ENCODE measurements at regions of chr19 and their contacts with region 1.

Region 1: GRCh38 chr19:46746281-46747013 is at the start of gene STRN4:
- DNase-seq: peak; percentile 68 to 75
- ATAC-seq: peak; percentile 67 to 72 (median 72)
- H3K4me3 ChIP-seq: peak within 1 kb of the TSS; percentile 99
- H3K27ac ChIP-seq: peak within 1 kb of the TSS; percentile 95
- H3K4me1 ChIP-seq: peaks cover 40% of the 10 kb centered on the region
- H3K27me3 ChIP-seq: no peaks in the 10 kb centered on the region
- CTCF ChIP-seq: no peak
- total RNA-seq, gene STRN4: 28.6 to 72.3 (median 40.6) TPM

Region 2: GRCh38 chr19:46616631-46617322 is 129.7 kb before region 1 on chr19:
- intact Hi-C with region 1: no loop called
- DNase-seq: peak in 1 of 2 donors; percentile 45
- ATAC-seq: peak in 3 of 4 donors; percentile 30 to 56 (median 47)
- H3K4me3 ChIP-seq: no peak overlapping the region
- H3K27ac ChIP-seq: no peak overlapping the region
- H3K4me1 ChIP-seq: peaks cover 17% of the 10 kb centered on the region
- H3K27me3 ChIP-seq: peaks cover 0 to 6% (median 0%) of the 10 kb centered on the region in 3 donors
- CTCF ChIP-seq: peak; percentile 13

Region 3: DNA sequence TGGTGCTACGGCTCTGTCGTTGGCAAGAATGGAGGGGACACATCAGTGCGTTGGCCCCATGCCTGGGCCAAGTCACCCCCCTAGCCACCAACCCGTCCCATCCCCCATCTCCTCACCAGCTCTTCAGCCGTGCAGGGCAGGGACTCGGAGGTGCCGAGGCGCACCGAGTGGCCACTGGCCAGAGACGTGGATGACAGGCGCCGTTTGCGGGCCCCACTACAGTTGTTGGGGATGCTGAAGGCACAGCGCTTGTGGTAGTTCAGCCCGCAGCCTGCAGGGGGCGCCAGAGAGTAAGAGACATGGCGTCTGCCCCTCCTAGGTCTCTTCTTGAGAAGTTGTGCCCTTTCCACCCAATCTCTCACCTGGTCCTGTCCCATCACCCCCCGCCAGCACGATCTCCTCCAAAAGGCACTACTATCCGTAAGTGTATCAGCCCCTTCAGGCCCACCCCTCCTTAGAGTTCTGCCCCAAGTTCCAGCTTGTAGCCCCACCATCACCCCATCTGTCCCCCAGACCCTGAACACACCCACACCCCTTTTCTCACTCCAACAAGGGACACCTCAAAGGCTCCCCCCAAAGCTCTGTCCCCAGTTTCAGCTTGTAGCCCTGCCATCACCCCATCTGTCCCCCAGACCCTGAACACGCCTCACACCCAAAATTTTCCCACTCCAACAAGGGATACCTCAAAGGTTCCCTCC is 41.9 kb before region 1 on chr19:
- intact Hi-C with region 1: loop called in 1 of 2 experiments (anchors 5 kb)
- DNase-seq: peak; percentile 76 to 87
- ATAC-seq: peak; percentile 76 to 86 (median 80)
- H3K4me3 ChIP-seq: no peak overlapping the region
- H3K27ac ChIP-seq: no peak overlapping the region
- H3K4me1 ChIP-seq: no peaks in the 10 kb centered on the region
- H3K27me3 ChIP-seq: no peaks in the 10 kb centered on the region
- CTCF ChIP-seq: peak; percentile 95

Region 4: GRCh38 chr19:46728693-46729676 is 17.5 kb before region 1 on chr19:
- intact Hi-C with region 1: no loop called
- DNase-seq: peak; percentile 80 to 85
- ATAC-seq: peak; percentile 71 to 80 (median 74)
- H3K4me3 ChIP-seq: no peak overlapping the region
- H3K27ac ChIP-seq: no peak overlapping the region
- H3K4me1 ChIP-seq: no peaks in the 10 kb centered on the region
- H3K27me3 ChIP-seq: no peaks in the 10 kb centered on the region
- CTCF ChIP-seq: peak; percentile 89

Region 5: DNA sequence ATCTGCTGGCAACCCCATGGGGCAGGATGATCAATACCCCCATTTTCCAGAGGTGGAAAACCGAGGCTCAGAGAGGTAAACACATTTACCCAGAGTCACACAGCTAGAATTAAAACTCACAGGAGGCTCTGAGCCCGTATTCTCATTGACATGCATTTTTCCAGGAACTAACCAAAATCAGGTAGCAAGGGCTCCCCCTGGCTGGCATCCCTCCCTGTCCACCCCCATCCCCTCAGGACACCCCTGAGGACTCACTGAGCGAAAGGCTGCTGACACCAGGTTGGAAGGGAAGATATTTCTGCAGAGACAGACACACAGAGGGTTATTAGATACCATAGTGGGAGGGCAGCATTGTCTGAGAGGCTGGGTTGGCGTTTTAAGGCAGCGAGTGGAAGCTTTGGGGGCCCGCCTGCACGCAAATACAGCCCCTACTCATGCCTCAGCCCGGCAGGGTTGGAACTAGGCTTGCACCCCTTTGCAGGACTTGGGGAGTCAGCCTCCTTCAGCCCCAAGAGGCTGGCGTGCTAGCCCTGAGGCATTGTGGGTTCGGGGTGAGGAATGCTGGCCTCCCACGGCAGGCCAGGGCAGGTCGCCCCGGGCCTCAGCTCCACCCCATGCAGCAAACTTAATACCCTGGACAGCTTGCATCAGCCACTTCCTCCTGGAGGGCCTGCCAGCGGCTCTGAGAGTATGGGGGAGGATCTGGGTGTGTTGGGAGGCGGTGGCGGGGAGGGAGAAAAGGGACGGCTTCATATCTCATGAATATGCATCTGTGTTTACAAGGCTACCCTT is 38.0 kb after region 1 on chr19:
- intact Hi-C with region 1: no loop called
- DNase-seq: peak; percentile 72 to 81
- ATAC-seq: peak in 2 of 4 donors; percentile 36 to 50
- H3K4me3 ChIP-seq: peak overlapping the region; percentile 37
- H3K27ac ChIP-seq: peak overlapping the region; percentile 23
- H3K4me1 ChIP-seq: peaks cover 9% of the 10 kb centered on the region
- H3K27me3 ChIP-seq: peaks cover 0 to 27% (median 4%) of the 10 kb centered on the region in 3 donors
- CTCF ChIP-seq: no peak

Region 6: DNA sequence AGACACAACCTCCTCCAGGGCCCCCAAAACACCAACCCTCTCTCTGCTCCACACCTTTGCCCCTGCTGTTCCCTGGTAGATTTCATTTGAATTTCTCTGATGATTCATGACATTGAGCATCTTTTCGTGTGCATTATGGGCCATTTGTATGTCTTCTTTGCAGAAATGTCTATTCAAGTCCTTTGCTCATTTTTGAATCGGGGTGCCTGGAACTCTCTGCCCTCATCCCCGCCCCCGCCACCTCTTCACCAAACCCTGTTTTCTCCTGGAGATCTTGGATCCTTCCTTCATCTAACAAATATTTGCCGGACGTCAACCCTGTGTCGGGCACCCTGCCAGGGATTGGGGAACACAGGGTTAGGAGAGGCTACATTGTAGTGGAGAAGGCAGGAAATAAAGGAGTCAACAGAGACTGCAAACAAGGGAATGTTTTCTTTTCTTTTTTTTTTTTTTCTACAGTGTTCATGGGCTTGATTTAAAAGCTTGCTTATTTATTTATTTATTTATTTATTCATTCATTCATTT is 67.5 kb after region 1 on chr19:
- intact Hi-C with region 1: no loop called
- DNase-seq: peak; percentile 56 to 75
- ATAC-seq: no peak
- H3K4me3 ChIP-seq: no peak overlapping the region
- H3K27ac ChIP-seq: no peak overlapping the region
- H3K4me1 ChIP-seq: no peaks in the 10 kb centered on the region
- H3K27me3 ChIP-seq: no peaks in the 10 kb centered on the region
- CTCF ChIP-seq: no peak

Measured in psoas muscle (tissue), 8 donors.